Left ventricle myocardium superior (tissue), 1 donor: ENCODE measurements at regions of chr1 and their contacts with region 1.

Region 1: DNA sequence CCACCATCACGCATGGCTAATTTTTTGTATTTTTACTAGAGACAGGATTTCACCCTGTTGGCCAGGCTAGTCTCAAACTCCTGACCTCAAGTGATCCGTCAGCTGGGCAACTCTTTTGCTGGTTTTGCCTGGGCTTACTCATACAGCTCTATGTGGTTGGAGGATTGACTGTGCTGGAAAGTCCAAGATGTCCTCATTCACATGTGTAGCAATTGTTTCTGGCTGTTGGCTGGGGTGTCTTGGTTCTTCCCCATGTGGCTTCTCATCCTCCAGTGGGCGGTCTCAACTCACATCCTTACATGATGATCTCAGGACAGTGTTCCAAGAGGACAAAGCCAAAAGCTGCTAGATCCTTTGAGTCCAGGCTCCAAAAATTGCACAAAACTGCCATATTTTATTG is 53.3 kb downstream of the TEX35 start:
- DNase-seq: no peak
- ATAC-seq: no peak

Region 2: DNA sequence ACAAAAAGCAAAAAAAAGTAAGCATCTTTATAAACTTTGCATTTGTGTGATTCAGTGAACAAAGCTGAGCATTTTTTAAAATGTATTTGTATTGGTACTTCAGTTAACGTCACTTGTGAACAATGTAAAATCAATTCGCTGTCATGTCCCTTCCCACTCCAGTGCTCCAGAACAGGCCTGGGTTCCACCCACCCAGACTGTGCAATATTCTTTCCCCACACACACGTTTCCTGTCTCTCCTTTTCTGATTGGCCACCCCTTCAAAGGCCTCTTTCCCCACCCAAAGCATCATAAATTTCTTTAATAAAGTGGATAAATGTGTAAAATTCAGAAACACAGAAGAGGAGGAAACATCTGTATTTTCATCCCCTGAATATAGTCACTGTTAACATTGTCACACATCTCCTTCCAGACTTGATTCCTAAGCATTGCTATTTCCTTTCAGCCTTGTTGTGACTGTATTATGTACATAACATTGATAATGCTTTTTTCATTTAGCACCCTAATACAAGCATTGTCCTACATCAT is 81.4 kb before region 1 on chr1:
- intact Hi-C with region 1: no loop called
- DNase-seq: no peak
- ATAC-seq: no peak

Region 3: GRCh38 chr1:178612261-178612660 is 46.1 kb after region 1 on chr1:
- intact Hi-C with region 1: no loop called
- DNase-seq: no peak
- ATAC-seq: no peak

Region 4: GRCh38 chr1:178739285-178740045 is 173.3 kb after region 1 on chr1:
- intact Hi-C with region 1: loop called (anchors 10 kb)
- DNase-seq: no peak
- ATAC-seq: peak; percentile 57